Mucosa of descending colon (tissue), 3 donors: ENCODE measurements at regions of chr2 and their contacts with region 1.

Region 1: DNA sequence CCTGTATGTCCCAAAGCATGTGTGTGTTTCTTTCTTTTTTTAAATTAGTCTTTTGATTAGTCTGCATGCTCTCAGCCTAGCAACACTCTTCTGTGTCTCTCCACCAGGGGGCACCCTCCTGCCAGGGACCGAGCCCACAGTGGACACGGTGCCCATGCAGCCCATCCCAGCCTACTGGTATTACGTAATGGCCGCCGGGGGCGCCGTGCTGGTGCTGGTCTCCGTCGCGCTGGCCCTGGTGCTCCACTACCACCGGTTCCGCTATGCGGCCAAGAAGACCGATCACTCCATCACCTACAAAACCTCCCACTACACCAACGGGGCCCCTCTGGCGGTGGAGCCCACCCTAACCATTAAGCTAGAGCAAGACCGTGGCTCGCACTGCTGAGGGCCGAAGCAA is 93.8 kb downstream of the NRP2 start:
- DNase-seq: peak in 2 of 3 donors; percentile 59 to 75
- ATAC-seq: peak; percentile 73
- H3K4me3 ChIP-seq: no peak overlapping the region
- H3K4me1 ChIP-seq: peaks cover 8% of the 10 kb centered on the region
- CTCF ChIP-seq: no peak

Region 2: DNA sequence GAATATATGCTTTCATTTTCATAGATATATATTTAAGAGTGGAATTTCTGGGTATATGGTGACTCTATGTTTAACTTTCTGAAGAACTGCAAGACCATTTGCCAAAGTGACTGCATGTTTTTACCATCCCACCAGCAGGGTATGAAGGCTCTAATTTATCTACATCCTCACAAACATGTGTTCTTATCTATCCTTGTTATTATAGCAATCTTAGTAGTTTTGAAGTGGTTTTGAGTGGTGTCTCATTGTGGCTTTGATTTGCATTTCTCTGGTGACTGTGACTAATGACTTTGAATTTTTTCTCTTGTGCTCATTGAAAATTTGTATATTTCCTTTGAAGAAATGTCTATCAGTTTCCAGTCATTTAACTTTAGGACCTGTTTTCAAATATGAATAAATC is 404.0 kb before region 1 on chr2:
- intact Hi-C with region 1: no loop called
- DNase-seq: no peak
- ATAC-seq: no peak
- H3K4me3 ChIP-seq: no peak overlapping the region
- H3K4me1 ChIP-seq: no peaks in the 10 kb centered on the region
- CTCF ChIP-seq: no peak

Region 3: DNA sequence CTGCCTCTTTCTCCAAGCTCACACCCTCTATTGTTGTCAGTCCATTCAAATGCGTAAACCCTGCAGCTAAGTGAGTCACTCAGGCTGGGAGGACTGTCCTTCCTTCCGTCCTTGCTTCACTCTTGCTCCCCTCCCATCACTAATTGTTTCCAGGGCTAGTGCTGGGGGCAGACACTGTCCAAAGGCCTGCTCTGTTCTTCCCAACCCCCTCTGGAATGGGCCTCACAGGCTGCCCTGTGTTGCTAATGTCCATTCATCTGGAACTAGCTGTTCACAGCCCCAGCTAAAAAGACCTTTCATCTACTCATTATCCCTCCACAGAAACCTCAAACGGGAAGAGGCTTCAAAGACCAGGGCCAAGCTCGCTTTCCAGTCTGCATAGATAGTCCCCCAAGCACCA is 125.7 kb before region 1 on chr2:
- intact Hi-C with region 1: no loop called
- DNase-seq: no peak
- ATAC-seq: no peak
- H3K4me3 ChIP-seq: no peak overlapping the region
- H3K4me1 ChIP-seq: no peaks in the 10 kb centered on the region
- CTCF ChIP-seq: no peak

Region 4: GRCh38 chr2:205714058-205714776 is 61.9 kb before region 1 on chr2:
- intact Hi-C with region 1: no loop called
- DNase-seq: no peak
- ATAC-seq: peak; percentile 43
- H3K4me3 ChIP-seq: no peak overlapping the region
- H3K4me1 ChIP-seq: no peaks in the 10 kb centered on the region
- CTCF ChIP-seq: no peak

Region 5: GRCh38 chr2:205885492-205886099 is 109.5 kb after region 1 on chr2:
- intact Hi-C with region 1: loop called (anchors 5 to 10 kb)
- DNase-seq: peak; percentile 86 to 95 (median 92)
- ATAC-seq: peak; percentile 95
- H3K4me3 ChIP-seq: no peak overlapping the region
- H3K4me1 ChIP-seq: no peaks in the 10 kb centered on the region
- CTCF ChIP-seq: peak; percentile 84